A549 (cell line): ENCODE measurements at regions of chr5 and their contacts with region 1.

Region 1: DNA sequence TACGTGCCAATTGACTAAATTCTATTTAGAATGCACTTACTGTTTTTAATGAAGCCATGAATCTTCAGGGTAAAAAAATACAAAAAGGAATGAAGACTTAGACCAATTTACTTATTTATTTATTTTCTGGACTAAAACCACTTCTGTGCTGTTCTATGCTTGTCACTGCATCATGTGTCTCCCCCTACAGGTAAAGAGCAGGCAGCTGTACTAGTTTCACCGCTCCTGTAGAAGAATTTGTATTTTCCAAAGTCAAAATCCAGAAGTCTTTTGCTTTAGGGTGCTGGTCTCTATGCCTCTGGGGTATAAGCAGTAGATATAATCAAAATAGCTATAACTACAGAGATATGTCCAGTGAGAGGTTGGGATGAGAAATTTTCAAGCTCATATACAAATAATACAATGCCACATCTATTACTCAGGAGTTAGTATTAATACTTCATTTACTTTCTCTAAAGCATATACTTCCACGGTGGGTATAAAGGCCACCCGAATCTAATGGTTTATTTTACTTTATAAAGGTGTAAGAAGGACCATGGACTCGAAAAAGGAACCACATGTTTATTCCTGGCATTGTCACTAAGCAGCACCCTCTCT is 591.5 kb downstream of the RAB3C start:
- DNase-seq: peak; percentile 38 to 88
- ATAC-seq: peak; percentile 82 to 86
- H3K4me3 ChIP-seq: no peak overlapping the region
- H3K27ac ChIP-seq: peak overlapping the region; percentile 75 to 83
- H3K4me1 ChIP-seq: peaks cover 76% of the 10 kb centered on the region
- CTCF ChIP-seq: peak; percentile 90
- EP300 ChIP-seq: no peak
- POLR2A ChIP-seq: no peak
- RAD21 ChIP-seq: peak; percentile 88 to 91

Region 2: GRCh38 chr5:58828258-58828657 is 346.1 kb before region 1 on chr5:
- CTCF ChIA-PET with region 1: no interaction called
- POLR2A ChIA-PET with region 1: no interaction called
- DNase-seq: no peak
- ATAC-seq: no peak
- H3K4me3 ChIP-seq: no peak overlapping the region
- H3K27ac ChIP-seq: no peak overlapping the region
- H3K4me1 ChIP-seq: no peaks in the 10 kb centered on the region
- CTCF ChIP-seq: no peak
- EP300 ChIP-seq: no peak
- POLR2A ChIP-seq: no peak
- RAD21 ChIP-seq: no peak

Region 3: DNA sequence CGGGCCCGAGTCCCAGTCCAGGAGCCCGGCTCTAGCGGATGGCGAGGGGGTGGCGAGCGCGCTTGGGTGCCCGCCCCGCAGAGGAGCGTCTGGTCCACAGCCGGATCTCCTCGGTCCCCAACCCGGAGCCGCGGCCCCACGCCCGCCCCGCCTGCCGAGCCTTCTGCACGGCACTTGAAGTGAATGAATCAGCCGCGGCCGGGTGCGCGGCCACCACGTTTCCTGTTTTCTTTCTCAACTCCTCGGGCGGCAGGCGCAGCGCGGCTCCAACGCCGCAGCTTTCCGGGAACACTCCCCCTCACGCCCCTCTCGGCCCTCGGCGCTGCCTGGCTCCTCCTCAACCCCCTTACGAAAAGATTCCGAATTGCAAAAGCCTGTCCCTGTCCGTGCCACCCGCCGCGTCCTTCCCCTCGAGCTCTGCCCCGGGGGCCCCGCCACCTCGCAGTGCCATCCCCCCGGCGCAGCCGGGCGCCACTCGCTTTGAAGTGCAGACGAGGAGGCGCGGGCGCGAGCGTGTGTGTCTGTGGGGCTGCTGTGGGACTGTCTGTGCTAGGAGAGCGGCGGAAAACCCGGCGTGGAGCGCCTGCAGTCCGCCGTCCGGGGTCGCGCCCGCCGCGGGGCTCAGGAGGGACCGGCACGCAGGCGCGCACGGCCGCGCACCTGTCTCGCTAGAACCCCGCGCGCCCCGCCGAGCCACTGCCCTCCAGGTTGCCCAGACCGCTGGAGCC is 134.9 kb before region 1 on chr5:
- CTCF ChIA-PET with region 1: interaction called, 22 read pairs
- POLR2A ChIA-PET with region 1: interaction called, 3 read pairs
- DNase-seq: peak in 1 of 2 experiments; percentile 85
- ATAC-seq: peak; percentile 63 to 68
- H3K4me3 ChIP-seq: peak overlapping the region; percentile 74
- H3K27ac ChIP-seq: peak overlapping the region; percentile 95 to 99
- H3K4me1 ChIP-seq: peaks cover 38% of the 10 kb centered on the region
- CTCF ChIP-seq: no peak
- EP300 ChIP-seq: peak; percentile 71 to 85; a peak in 3 of 5 replicates
- POLR2A ChIP-seq: peak; percentile 8; the same call in 1 of the 2 replicates
- RAD21 ChIP-seq: no peak; a peak in 1 of 5 replicates

Region 4: GRCh38 chr5:59126708-59127573 is 47.4 kb before region 1 on chr5:
- CTCF ChIA-PET with region 1: interaction called, 31 read pairs
- POLR2A ChIA-PET with region 1: interaction called, 8 read pairs
- DNase-seq: peak in 1 of 2 experiments; percentile 87
- ATAC-seq: peak; percentile 30 to 57
- H3K4me3 ChIP-seq: peak overlapping the region; percentile 0; the same call in 1 of the 3 replicates
- H3K27ac ChIP-seq: peak overlapping the region; percentile 94 to 100
- H3K4me1 ChIP-seq: peaks cover 94% of the 10 kb centered on the region
- CTCF ChIP-seq: no peak
- EP300 ChIP-seq: no peak
- POLR2A ChIP-seq: no peak
- RAD21 ChIP-seq: no peak

Region 5: DNA sequence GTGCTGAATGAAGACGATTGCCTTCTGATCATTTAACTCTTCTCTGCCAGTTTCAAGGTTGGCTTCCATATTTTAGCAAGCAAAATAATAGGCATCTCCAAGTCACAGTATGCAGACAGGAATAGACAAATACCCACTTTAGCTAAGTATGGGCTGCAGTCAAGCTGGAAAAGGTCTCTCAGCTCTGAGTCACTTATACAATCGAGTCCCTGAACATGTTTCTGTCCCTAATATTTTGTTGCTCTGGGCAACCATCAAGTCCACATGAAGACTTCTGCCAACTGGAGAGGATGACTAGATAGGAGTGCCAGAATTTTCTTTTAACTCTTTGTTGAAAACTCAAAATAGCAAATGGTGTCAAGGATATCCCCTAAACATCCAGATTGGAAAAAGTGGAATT is 16.2 kb before region 1 on chr5:
- CTCF ChIA-PET with region 1: interaction called, 16 read pairs
- POLR2A ChIA-PET with region 1: no interaction called
- DNase-seq: peak; percentile 20 to 77
- ATAC-seq: peak; percentile 69 to 78; a peak in 5 of 6 replicates
- H3K4me3 ChIP-seq: no peak overlapping the region
- H3K27ac ChIP-seq: peak overlapping the region; percentile 47 to 78; a peak in 5 of 6 replicates
- H3K4me1 ChIP-seq: peaks cover 75% of the 10 kb centered on the region
- CTCF ChIP-seq: no peak
- EP300 ChIP-seq: no peak
- POLR2A ChIP-seq: no peak
- RAD21 ChIP-seq: no peak

Region 6: DNA sequence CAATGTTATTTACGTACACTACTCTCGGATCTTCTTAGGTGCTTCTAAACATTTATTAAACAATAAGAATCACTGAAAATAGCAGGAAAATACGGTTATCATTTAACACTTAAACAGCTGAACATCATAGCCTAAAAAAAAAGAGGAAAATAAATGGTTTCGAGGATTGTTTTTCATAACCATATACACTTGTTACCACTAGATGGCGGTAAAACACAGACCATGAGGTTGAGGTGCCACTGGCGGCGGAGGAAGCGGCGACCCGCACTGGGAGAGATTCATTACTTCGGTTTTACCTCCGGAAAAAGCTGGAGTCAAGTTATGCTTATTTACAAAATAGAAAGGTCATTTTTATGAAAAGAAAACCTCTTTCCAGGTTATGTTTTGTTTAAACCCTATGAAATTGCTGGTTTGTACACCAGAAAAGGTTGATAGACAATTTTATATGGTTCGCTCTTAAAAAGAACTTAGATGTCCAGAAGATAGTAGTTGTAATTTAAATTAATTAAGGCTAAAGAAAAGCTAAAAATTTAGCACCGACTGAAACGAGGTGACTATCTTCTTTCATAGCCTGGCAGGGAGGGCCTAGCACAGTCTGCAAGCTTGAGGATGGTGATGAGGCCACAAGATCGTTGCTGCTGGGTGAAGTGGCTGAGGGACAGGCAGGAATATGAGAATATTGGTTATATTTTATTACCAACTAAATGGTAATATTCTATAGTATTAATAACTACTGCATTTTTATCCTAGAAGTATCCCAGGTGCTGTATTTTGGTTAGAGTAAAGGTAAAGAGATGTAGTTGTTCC is 14.3 kb after region 1 on chr5:
- CTCF ChIA-PET with region 1: interaction called, 21 read pairs
- POLR2A ChIA-PET with region 1: no interaction called
- DNase-seq: peak; percentile 37 to 89
- ATAC-seq: peak; percentile 81 to 82; a peak in 5 of 6 replicates
- H3K4me3 ChIP-seq: peak overlapping the region; percentile 25; the same call in 2 of the 3 replicates
- H3K27ac ChIP-seq: peak overlapping the region; percentile 88 to 89
- H3K4me1 ChIP-seq: peaks cover 99% of the 10 kb centered on the region
- CTCF ChIP-seq: peak; percentile 93
- EP300 ChIP-seq: no peak
- POLR2A ChIP-seq: no peak
- RAD21 ChIP-seq: peak; percentile 92 to 96